ENCODE measurements at regions of chr20 and their contacts with region 1.

Region 1: DNA sequence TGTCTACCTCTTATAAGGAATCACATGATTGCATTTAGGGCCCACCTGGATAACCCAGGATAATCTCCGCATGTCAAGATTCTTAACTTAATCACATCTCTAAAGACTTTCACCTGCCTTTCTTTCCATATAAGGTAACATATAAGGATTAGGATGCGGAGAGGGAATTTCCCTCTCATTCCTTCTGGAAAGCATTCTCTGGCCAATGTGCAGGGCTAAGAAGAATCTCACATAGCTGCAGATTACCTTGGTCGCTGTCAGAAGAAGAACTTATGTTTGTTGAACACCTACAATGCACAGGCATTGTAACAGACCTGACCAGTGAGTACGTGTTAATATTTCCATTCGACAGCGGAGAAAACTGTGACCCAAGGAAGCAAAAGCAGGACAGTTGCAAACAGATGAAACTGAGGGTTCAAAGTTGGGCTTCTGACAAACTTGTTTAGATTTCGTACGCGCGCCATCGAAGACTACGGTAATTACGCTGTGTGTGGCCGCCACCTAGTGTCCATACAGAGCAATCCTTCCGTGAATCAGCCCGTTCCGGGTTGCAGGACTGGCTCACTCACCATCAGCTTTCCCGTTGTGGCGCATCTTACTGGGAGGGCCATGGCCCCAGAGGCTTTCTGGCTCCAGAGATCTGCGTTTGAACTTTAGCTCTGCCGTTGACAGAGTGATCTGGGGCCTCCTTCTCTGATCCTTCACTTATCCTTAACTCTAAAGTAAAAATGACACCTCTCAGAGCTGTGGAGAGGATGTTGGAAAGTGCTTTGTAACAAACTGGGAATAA is 9.5 kb downstream of the C20orf202 start:
- DNase-seq: peak; percentile 61 to 73
- ATAC-seq: peak; percentile 80 to 94 (median 91)
- H3K4me3 ChIP-seq: no peak overlapping the region
- H3K27ac ChIP-seq: no peak overlapping the region
- H3K4me1 ChIP-seq: no peaks in the 10 kb centered on the region
- H3K27me3 ChIP-seq: peaks cover 0 to 5% (median 0%) of the 10 kb centered on the region in 3 donors
- CTCF ChIP-seq: peak; percentile 80

Region 2: GRCh38 chr20:815914-816606 is 396.7 kb before region 1 on chr20:
- intact Hi-C with region 1: loop called in 1 of 2 experiments (anchors 2 kb)
- DNase-seq: peak; percentile 54 to 70
- ATAC-seq: peak; percentile 63 to 73 (median 70)
- H3K4me3 ChIP-seq: no peak overlapping the region
- H3K27ac ChIP-seq: no peak overlapping the region
- H3K4me1 ChIP-seq: peaks cover 3% of the 10 kb centered on the region
- H3K27me3 ChIP-seq: peaks cover 0 to 3% (median 0%) of the 10 kb centered on the region in 3 donors
- CTCF ChIP-seq: peak; percentile 99

Region 3: GRCh38 chr20:956330-956951 is 256.4 kb before region 1 on chr20:
- intact Hi-C with region 1: loop called in 1 of 2 experiments (anchors 10 kb)
- DNase-seq: peak; percentile 46 to 81
- ATAC-seq: peak; percentile 82 to 95 (median 90)
- H3K4me3 ChIP-seq: no peak overlapping the region
- H3K27ac ChIP-seq: no peak overlapping the region
- H3K4me1 ChIP-seq: no peaks in the 10 kb centered on the region
- H3K27me3 ChIP-seq: peaks cover 0 to 29% (median 0%) of the 10 kb centered on the region in 3 donors
- CTCF ChIP-seq: peak; percentile 98

Region 4: DNA sequence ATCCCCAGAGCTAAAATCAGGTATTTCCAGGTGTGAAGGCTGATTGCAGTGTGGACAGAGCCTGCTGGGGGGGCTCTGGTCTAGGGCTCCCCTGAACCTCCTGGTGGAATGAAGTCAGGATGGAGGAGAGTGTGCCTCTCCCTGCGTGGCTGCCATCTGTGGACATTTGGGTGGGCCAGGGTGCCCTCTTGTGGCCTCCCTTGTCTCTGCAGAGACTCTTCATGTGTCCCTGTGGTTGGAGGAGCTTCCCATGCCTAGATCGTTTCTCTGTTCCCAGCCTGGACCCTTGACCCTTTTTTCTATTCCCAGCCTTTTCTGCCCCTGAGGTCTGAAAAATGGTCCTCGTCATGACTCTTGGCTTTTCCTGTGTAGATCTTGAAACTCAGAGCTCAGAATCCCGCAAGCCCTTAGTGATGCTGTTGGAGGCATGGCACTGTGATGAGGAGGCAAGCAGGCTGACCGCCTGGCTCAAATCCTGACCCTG is 104.3 kb before region 1 on chr20:
- intact Hi-C with region 1: loop called in 1 of 2 experiments (anchors 5 kb)
- DNase-seq: peak; percentile 55 to 58
- ATAC-seq: peak; percentile 57 to 75 (median 74)
- H3K4me3 ChIP-seq: no peak overlapping the region
- H3K27ac ChIP-seq: no peak overlapping the region
- H3K4me1 ChIP-seq: no peaks in the 10 kb centered on the region
- H3K27me3 ChIP-seq: no peaks in the 10 kb centered on the region
- CTCF ChIP-seq: peak; percentile 72

Region 5: DNA sequence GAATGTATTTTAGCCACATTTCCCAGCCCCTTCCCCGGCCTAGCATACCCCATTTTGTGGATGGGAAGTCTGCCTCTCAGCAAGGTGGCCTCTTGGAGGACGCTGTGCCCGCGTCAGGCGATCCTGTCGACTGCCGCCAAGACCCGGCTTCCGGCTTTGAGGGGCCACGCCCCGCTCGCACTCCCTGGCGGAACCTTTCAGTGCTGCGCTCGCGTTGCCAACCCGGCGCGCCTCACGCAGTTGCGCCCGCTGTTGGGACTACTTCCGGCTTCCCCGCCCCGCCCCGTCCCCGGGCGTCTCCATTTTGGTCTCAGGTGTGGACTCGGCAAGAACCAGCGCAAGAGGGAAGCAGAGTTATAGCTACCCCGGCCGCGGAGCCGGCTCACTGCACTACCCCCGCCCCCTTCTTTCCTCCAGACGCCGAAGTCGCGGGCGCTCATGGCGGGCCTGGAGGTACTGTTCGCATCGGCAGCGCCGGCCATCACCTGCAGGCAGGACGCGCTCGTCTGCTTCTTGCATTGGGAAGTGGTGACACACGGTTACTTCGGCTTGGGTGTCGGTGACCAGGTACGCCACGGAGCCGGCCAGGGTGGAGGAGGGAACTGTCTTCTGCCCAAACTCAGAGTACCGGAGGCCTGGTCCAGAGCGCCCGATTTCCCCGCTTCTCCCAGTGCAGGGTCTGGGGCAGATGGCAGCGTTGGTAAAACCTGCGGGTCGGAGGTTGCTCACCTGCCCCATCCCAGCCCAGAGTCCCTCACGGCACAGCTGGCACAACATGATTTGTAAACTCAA is 94.3 kb before region 1 on chr20 and contains the start of gene PSMF1:
- intact Hi-C with region 1: loop called in 1 of 2 experiments (anchors 5 kb)
- DNase-seq: peak; percentile 96 to 97
- ATAC-seq: peak; percentile 98 to 99 (median 98)
- H3K4me3 ChIP-seq: peak within 1 kb of the TSS; percentile 98
- H3K27ac ChIP-seq: peak within 1 kb of the TSS; percentile 85
- H3K4me1 ChIP-seq: peaks cover 50% of the 10 kb centered on the region
- H3K27me3 ChIP-seq: no peaks in the 10 kb centered on the region
- CTCF ChIP-seq: peak; percentile 14
- total RNA-seq, gene PSMF1: 137 to 159 (median 144) TPM

Measured in psoas muscle (tissue), 8 donors.